IMR-90 (cell line): ENCODE measurements at regions of chr1 and their contacts with region 1.

Region 1: GRCh38 chr1:113389953-113390834 is at the start of gene MAGI3:
- DNase-seq: peak; percentile 98
- ATAC-seq: peak; percentile 94
- H3K4me3 ChIP-seq: peak within 1 kb of the TSS; percentile 72
- H3K27ac ChIP-seq: peak within 1 kb of the TSS; percentile 52
- H3K4me1 ChIP-seq: peaks cover 6% of the 10 kb centered on the region
- H3K27me3 ChIP-seq: no peaks in the 10 kb centered on the region
- CTCF ChIP-seq: 0 out of 2 replicates have a peak, but pooled peaks have one; percentile 2
- POLR2A ChIP-seq: peak; percentile 83
- RAD21 ChIP-seq: no peak; the same call in 1 of the 2 replicates
- total RNA-seq, gene MAGI3: 8.8 and 9.2 TPM in 2 replicates

Region 2: DNA sequence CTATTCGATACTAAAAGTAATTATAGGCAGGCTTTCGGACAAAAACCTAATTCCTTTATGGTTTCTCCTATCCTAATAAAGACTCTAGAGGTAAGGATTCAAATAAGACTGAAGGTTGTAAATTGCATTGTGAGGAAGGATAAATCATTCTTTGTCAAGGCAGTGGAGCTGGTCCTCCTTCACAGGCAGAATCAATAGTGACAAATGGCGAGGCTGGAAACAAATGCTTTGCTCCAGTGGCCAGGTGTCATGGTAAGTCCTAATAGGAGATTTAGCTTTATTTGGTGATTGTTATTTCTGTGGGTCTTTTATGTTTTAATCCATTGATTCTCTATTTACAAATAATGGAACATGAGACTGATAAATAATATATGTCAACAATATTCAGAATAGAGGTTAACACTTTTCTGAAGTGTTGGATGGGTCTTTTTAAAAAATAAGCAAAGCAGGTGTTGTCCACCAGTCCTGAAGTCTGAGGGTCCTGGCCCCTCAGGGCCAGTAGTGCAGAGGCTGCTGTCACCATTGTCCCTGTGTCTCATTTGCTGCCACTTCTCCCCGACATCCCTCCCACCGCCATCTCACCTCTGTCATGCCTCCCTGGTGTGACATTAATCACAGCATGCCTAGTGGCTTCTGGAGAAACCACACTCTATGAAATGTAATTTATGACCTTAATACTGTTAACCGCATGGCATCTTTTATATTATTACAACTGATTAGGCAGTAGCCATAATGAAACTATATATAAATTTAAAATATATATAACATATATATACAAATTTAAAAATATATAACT is 120.8 kb before region 1 on chr1:
- CTCF ChIA-PET with region 1: no interaction called
- POLR2A ChIA-PET with region 1: no interaction called
- dilution Hi-C with region 1: no loop called
- in situ Hi-C with region 1: no loop called
- intact Hi-C with region 1: no loop called
- DNase-seq: no peak
- ATAC-seq: no peak
- H3K4me3 ChIP-seq: no peak overlapping the region
- H3K27ac ChIP-seq: no peak overlapping the region
- H3K4me1 ChIP-seq: no peaks in the 10 kb centered on the region
- H3K27me3 ChIP-seq: peaks cover 4% of the 10 kb centered on the region
- CTCF ChIP-seq: no peak
- POLR2A ChIP-seq: no peak
- RAD21 ChIP-seq: no peak

Region 3: DNA sequence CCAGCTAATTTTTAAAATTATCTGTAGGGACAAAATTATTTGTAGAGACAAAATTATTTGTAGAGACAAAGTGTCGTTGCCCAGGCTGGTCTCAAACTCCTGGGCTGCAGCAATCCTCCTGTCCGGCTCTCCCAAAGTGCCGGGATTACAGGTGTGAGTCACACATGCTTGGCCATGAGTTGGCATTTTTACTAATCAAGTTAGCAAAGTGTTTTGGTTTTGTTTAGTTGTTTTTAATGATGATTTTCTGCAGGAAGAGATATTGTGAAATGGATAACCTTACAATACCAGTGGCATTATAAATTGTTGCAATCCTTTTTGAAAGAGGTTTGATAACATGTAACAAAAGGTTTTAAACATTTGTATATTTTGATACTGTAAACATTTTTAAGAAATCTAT is 65.2 kb before region 1 on chr1:
- CTCF ChIA-PET with region 1: no interaction called
- POLR2A ChIA-PET with region 1: no interaction called
- dilution Hi-C with region 1: no loop called
- in situ Hi-C with region 1: loop called (anchors 10 kb)
- intact Hi-C with region 1: no loop called
- DNase-seq: no peak
- ATAC-seq: no peak
- H3K4me3 ChIP-seq: no peak overlapping the region
- H3K27ac ChIP-seq: no peak overlapping the region
- H3K4me1 ChIP-seq: no peaks in the 10 kb centered on the region
- H3K27me3 ChIP-seq: peaks cover 2% of the 10 kb centered on the region; the same call in 1 of the 2 replicates
- CTCF ChIP-seq: no peak
- POLR2A ChIP-seq: no peak
- RAD21 ChIP-seq: no peak

Region 4: DNA sequence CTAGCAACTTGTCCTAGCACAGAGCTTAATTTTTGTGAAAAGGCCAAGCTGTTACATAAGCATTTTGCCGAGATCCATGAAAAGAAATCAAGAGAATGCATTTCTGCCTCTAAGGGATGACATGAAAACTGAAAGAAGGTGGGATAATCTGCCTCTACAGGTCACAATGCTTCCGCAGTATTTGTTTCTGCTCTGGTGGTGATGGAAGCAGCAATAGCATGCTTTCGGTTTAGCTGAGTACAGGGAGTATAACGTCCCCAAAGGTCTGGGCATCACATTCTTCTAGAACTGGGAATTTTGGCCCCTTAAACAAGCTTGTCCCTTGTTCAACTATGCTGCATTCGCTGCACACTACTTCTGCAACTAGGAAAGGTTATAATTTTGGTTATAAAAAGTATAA is 14.3 kb before region 1 on chr1:
- CTCF ChIA-PET with region 1: no interaction called
- POLR2A ChIA-PET with region 1: no interaction called
- dilution Hi-C with region 1: no loop called
- in situ Hi-C with region 1: no loop called
- intact Hi-C with region 1: no loop called
- DNase-seq: no peak
- ATAC-seq: no peak
- H3K4me3 ChIP-seq: no peak overlapping the region
- H3K27ac ChIP-seq: no peak overlapping the region
- H3K4me1 ChIP-seq: no peaks in the 10 kb centered on the region
- H3K27me3 ChIP-seq: no peaks in the 10 kb centered on the region; the same call in 1 of the 2 replicates
- CTCF ChIP-seq: no peak
- POLR2A ChIP-seq: no peak
- RAD21 ChIP-seq: no peak

Region 5: GRCh38 chr1:113542221-113542701 is 152.1 kb after region 1 on chr1:
- CTCF ChIA-PET with region 1: no interaction called
- POLR2A ChIA-PET with region 1: no interaction called
- dilution Hi-C with region 1: no loop called
- in situ Hi-C with region 1: no loop called
- intact Hi-C with region 1: loop called (anchors 5 kb)
- DNase-seq: peak; percentile 95
- ATAC-seq: peak; percentile 97
- H3K4me3 ChIP-seq: no peak overlapping the region
- H3K27ac ChIP-seq: no peak overlapping the region; the same call in 1 of the 2 replicates
- H3K4me1 ChIP-seq: peaks cover 9% of the 10 kb centered on the region
- H3K27me3 ChIP-seq: no peaks in the 10 kb centered on the region
- CTCF ChIP-seq: no peak
- POLR2A ChIP-seq: no peak
- RAD21 ChIP-seq: peak; percentile 15; the same call in 1 of the 2 replicates

Region 6: GRCh38 chr1:113677250-113678158 is 287.3 kb after region 1 on chr1:
- CTCF ChIA-PET with region 1: no interaction called
- POLR2A ChIA-PET with region 1: no interaction called
- dilution Hi-C with region 1: no loop called
- in situ Hi-C with region 1: no loop called
- intact Hi-C with region 1: loop called (anchors 2 kb)
- DNase-seq: peak; percentile 63
- ATAC-seq: peak; percentile 50
- H3K4me3 ChIP-seq: no peak overlapping the region
- H3K27ac ChIP-seq: no peak overlapping the region
- H3K4me1 ChIP-seq: peaks cover 2% of the 10 kb centered on the region; the same call in 1 of the 2 replicates
- H3K27me3 ChIP-seq: no peaks in the 10 kb centered on the region
- CTCF ChIP-seq: peak; percentile 68
- POLR2A ChIP-seq: no peak
- RAD21 ChIP-seq: peak; percentile 68

Region 7: GRCh38 chr1:113904674-113905434 is 514.7 kb after region 1 on chr1 and contains the starts of genes AP4B1 and DCLRE1B:
- CTCF ChIA-PET with region 1: no interaction called
- POLR2A ChIA-PET with region 1: no interaction called
- dilution Hi-C with region 1: no loop called
- in situ Hi-C with region 1: no loop called
- intact Hi-C with region 1: loop called (anchors 10 kb)
- DNase-seq: peak; percentile 100
- ATAC-seq: peak; percentile 95
- H3K4me3 ChIP-seq: peak within 1 kb of the TSS; percentile 58
- H3K27ac ChIP-seq: peak within 1 kb of the TSS; percentile 83
- H3K4me1 ChIP-seq: no peaks in the 10 kb centered on the region
- H3K27me3 ChIP-seq: no peaks in the 10 kb centered on the region
- CTCF ChIP-seq: peak; percentile 87
- POLR2A ChIP-seq: peak; percentile 86
- RAD21 ChIP-seq: peak; percentile 84
- total RNA-seq, gene AP4B1: 16.7 and 18.1 TPM in 2 replicates
- total RNA-seq, gene DCLRE1B: 6.1 TPM in 2 replicates